A673 (cell line): ENCODE measurements at regions of chr10 and their contacts with region 1.

Region 1: GRCh38 chr10:101782811-101783735 is at the start of gene NPM3:
- DNase-seq: peak; percentile 94
- H3K4me3 ChIP-seq: peak within 1 kb of the TSS; percentile 72
- H3K27ac ChIP-seq: peak within 1 kb of the TSS; percentile 43
- H3K4me1 ChIP-seq: peaks cover 26% of the 10 kb centered on the region
- H3K27me3 ChIP-seq: no peaks in the 10 kb centered on the region
- CTCF ChIP-seq: no peak
- total RNA-seq, gene NPM3: 94.7 and 98.2 TPM in 2 replicates

Region 2: DNA sequence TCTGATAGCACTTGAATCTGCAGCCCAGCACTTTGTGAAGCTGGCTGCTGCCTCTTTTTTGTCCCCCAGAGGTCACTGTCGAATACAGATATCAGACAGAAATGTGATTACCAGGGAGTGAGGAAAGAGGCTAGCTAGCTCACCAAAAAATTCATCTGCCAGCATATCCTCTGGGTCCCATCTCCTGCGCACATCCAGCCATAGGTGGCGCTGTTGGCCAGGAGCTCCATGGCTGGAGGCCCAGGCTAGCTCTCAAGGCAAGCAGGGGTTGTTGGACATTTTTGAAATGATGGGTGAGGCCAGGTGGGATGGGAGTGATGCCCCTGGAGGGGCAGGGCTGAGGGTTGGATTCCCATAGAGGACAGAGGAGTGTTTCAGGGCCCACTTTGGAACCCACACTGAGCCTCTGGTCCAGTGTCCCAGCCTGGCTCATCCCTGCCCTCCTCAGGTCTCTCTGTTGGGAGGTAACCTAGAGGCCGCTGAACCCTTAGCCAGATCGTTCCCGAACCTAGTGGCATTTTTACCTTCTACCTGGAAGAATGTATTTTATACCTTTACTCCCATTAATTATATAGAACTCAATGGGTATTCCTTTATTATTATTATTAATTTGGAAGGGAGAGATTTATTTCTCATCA is 180.2 kb before region 1 on chr10:
- CTCF ChIA-PET with region 1: interaction called, 35 read pairs
- POLR2A ChIA-PET with region 1: no interaction called
- intact Hi-C with region 1: loop called (anchors 1 kb)
- DNase-seq: peak; percentile 85
- H3K4me3 ChIP-seq: no peak overlapping the region
- H3K27ac ChIP-seq: no peak overlapping the region
- H3K4me1 ChIP-seq: no peaks in the 10 kb centered on the region
- H3K27me3 ChIP-seq: no peaks in the 10 kb centered on the region
- CTCF ChIP-seq: peak; percentile 94

Region 3: DNA sequence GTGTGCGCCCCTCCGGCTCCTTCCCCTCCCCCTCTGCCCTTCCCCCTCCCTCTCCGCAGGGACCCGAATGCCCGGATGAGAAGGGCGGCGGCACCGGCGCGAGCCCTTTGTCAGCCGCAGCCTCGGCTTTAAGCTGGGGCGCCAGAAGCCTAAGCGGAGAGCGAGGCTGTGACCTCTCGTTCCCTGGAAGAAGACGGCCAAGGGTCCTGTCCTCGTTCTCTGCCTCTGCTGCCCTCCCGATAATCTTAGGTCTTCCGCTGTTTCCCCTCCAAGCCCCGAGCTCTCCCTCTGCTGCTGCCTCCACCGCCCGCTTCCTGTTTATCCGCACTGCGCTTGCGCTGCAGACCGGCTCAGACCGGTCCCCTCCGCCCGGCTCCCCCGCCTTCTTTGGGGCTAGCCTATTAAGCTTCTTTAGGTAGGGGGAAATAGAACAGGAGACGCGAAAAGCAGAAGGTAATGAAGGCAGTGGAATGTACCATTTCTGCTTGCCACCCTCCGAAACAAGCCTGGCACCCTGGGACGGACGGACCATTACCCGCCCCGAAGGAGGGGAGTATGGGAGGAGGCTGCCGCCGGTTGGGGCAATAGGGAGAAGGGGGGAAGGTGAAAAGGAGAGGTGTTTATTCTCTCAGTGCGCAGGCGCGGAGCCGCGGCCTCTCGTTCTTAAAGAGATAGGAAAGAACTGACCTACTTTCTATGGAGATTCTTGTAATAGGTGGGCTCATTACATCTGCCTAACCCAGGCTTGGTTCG is 35.2 kb after region 1 on chr10 and contains the start of gene OGA:
- CTCF ChIA-PET with region 1: interaction called, 3 read pairs
- POLR2A ChIA-PET with region 1: no interaction called
- intact Hi-C with region 1: loop called (anchors 5 kb)
- DNase-seq: peak; percentile 100
- H3K4me3 ChIP-seq: peak within 1 kb of the TSS; percentile 98
- H3K27ac ChIP-seq: peak within 1 kb of the TSS; percentile 88
- H3K4me1 ChIP-seq: peaks cover 10% of the 10 kb centered on the region
- H3K27me3 ChIP-seq: no peaks in the 10 kb centered on the region
- CTCF ChIP-seq: no peak
- total RNA-seq, gene OGA: 109 and 114 TPM in 2 replicates